HCT116 (cell line): ENCODE measurements at regions of chr15 and their contacts with region 1.

Region 1: GRCh38 chr15:81000624-81001151 is at the start of gene TLNRD1:
- DNase-seq: peak; percentile 80
- ATAC-seq: peak; percentile 78
- H3K4me3 ChIP-seq: peak within 1 kb of the TSS; percentile 66 to 77
- H3K27ac ChIP-seq: peak within 1 kb of the TSS; percentile 90
- H3K4me1 ChIP-seq: peaks cover 15 to 36% of the 10 kb centered on the region in 2 experiments
- H3K27me3 ChIP-seq: no peaks in the 10 kb centered on the region
- CTCF ChIP-seq: no peak
- POLR2A ChIP-seq: peak; percentile 84
- RAD21 ChIP-seq: no peak
- total RNA-seq, gene TLNRD1: 22.5 TPM

Region 2: DNA sequence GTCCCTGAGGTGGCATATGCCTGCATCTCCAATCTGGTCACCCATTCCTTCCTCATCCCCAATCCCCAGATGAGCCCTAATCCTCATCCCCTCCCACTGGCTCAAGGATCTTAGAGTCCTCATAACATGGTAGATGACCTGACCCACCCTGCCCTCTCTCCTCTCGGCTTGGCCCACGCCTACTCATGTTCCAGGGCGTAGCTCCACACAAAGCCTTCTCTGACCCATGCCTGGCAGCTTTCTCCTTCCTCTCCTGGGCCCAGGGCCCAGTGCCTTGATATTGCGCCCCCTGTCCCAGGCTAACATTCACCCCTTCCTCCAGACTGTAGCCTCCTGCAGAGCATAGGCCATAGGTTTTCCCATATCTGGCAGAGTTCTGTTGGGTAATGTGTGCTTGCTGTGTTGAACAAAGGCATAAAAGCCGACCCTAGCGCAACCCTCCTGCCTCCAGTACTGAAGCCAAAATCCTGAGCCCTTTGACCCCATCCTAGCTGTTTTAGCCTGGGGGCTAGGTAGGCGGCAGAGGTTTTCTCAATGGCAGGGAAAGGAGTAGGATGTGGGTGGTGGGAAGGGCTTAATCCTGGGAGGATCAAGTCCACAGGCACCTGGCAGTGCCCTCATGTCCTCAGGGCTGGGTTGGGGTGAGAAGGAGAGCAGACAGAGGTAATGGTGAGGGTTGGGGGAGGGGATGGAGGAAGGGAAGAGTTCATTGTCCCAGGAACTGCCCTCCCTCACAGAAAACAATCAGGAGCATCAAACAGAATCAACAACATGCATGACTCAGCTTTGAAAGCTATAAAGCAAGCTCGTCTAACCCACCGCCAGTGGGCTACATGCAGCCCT is 46.5 kb before region 1 on chr15:
- CTCF ChIA-PET with region 1: no interaction called
- POLR2A ChIA-PET with region 1: no interaction called
- RAD21 ChIA-PET with region 1: no interaction called
- intact Hi-C with region 1: loop called (anchors 1 kb)
- DNase-seq: no peak
- ATAC-seq: no peak
- H3K4me3 ChIP-seq: no peak overlapping the region
- H3K27ac ChIP-seq: no peak overlapping the region; the same call in 1 of the 2 replicates
- H3K4me1 ChIP-seq: peaks cover 37 to 44% of the 10 kb centered on the region in 2 experiments
- H3K27me3 ChIP-seq: no peaks in the 10 kb centered on the region
- CTCF ChIP-seq: no peak
- POLR2A ChIP-seq: no peak
- RAD21 ChIP-seq: no peak

Region 3: DNA sequence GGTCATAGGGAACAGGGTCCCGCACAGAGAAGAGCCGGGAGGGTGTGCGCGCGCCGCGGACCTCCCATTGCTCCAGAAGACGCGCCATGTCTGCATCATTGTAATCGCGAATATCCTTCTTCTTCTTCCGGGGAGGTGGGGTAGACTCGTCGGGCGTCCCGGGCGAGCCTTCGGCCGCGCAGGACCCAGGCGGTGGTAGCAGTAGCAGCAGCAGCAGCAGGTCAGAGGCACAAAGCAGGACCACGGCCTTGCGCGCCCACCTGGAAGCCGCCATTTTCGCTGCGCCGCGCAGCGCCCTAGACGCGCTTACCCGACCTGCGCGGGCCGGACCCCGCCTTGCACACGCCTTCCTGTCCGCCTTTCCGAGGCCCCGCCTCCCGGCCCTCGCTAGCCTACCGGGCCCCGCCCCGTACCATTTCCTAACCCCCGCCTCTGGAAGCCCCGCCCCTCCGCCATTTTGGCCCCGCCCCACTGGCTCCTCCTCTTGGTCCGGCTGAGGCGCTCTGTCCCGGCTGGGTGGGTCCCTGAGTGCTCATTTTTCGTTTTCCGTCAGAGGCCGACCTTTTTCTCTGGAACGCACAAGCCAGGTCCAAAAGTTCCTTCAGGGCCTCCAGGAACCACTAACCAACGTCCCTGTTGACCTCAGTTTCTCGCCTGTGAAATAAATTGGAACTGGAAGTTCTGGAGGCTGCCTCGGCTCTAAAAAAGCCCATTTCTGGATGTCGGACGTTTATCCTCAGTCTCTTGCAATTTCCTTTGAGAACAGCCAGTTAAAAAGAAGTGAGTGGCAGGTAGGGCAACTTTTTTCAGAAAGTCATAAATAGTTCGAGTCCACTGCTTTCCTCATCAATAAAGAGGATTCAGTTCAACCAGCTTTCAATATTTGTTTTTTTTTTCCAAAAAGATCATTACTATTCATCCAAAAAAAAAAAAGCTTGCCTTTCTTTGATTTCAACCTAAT is 10.9 kb before region 1 on chr15 and contains the start of gene MESD:
- CTCF ChIA-PET with region 1: interaction called, 3 read pairs
- POLR2A ChIA-PET with region 1: interaction called, 6 read pairs
- RAD21 ChIA-PET with region 1: interaction called in 1 of 2 experiments, 3 read pairs
- intact Hi-C with region 1: loop called (anchors 1 kb)
- DNase-seq: peak; percentile 85
- ATAC-seq: peak; percentile 98
- H3K4me3 ChIP-seq: peak within 1 kb of the TSS; percentile 97 to 100
- H3K27ac ChIP-seq: peak within 1 kb of the TSS; percentile 77
- H3K4me1 ChIP-seq: peaks cover 13 to 29% of the 10 kb centered on the region in 2 experiments; a peak in 3 of 4 replicates
- H3K27me3 ChIP-seq: no peaks in the 10 kb centered on the region
- CTCF ChIP-seq: no peak
- POLR2A ChIP-seq: peak; percentile 89
- RAD21 ChIP-seq: no peak
- total RNA-seq, gene MESD: 22.5 TPM

Region 4: GRCh38 chr15:81023483-81024264 is 23.0 kb after region 1 on chr15:
- CTCF ChIA-PET with region 1: no interaction called
- POLR2A ChIA-PET with region 1: no interaction called
- RAD21 ChIA-PET with region 1: no interaction called
- intact Hi-C with region 1: no loop called
- DNase-seq: no peak
- ATAC-seq: no peak
- H3K4me3 ChIP-seq: no peak overlapping the region
- H3K27ac ChIP-seq: no peak overlapping the region
- H3K4me1 ChIP-seq: peaks cover 0 to 4% of the 10 kb centered on the region in 2 experiments; a peak in 1 of 4 replicates
- H3K27me3 ChIP-seq: no peaks in the 10 kb centered on the region
- CTCF ChIP-seq: no peak
- POLR2A ChIP-seq: no peak
- RAD21 ChIP-seq: no peak

Region 5: GRCh38 chr15:81091889-81092558 is 91.3 kb after region 1 on chr15:
- CTCF ChIA-PET with region 1: no interaction called
- POLR2A ChIA-PET with region 1: interaction called, 3 read pairs
- RAD21 ChIA-PET with region 1: no interaction called
- intact Hi-C with region 1: loop called (anchors 5 kb)
- DNase-seq: peak; percentile 86
- ATAC-seq: peak; percentile 95
- H3K4me3 ChIP-seq: peak overlapping the region; percentile 20 to 49
- H3K27ac ChIP-seq: peak overlapping the region; percentile 87
- H3K4me1 ChIP-seq: peaks cover 12 to 16% of the 10 kb centered on the region in 2 experiments
- H3K27me3 ChIP-seq: no peaks in the 10 kb centered on the region
- CTCF ChIP-seq: no peak
- POLR2A ChIP-seq: no peak
- RAD21 ChIP-seq: peak; percentile 36; the same call in 1 of the 2 replicates